H1 (cell line): ENCODE measurements at regions of chr20 and their contacts with region 1.

Region 1: GRCh38 chr20:52312132-52312729 is 120.7 kb upstream of the ZFP64 start:
- DNase-seq: no peak
- H3K4me3 ChIP-seq: no peak overlapping the region
- H3K27ac ChIP-seq: no peak overlapping the region
- H3K4me1 ChIP-seq: peaks cover 2 to 15% (median 6%) of the 10 kb centered on the region in 4 experiments; a peak in 6 of 7 replicates
- H3K27me3 ChIP-seq: peaks cover 0 to 2% (median 0%) of the 10 kb centered on the region in 4 experiments; a peak in 1 of 7 replicates
- CTCF ChIP-seq: peak in 2 of 3 experiments; percentile 61 to 71; a peak in 3 of 4 replicates
- EP300 ChIP-seq: no peak
- POLR2A ChIP-seq: no peak
- RAD21 ChIP-seq: peak; percentile 67 to 72

Region 2: DNA sequence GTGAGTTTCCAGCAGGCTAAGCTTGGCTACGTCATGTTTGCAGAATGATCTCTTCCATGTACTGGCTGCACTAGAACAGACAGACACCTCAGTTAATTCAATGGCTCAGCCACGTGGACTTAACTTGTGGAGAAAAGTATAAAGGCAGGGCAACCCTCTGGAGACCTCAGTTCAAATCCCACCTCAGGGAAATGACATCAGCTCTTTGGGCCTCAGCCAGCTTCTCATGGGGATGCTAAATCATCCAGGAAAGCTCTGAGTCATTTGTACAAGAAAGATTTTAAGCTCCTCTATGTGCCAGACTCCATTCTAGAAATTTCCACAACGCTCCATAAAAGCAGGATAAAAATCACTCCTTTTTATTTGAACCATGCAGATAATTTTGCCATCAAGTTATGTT is 381.5 kb before region 1 on chr20:
- CTCF ChIA-PET with region 1: no interaction called
- POLR2A ChIA-PET with region 1: no interaction called
- DNase-seq: no peak
- H3K4me3 ChIP-seq: no peak overlapping the region
- H3K27ac ChIP-seq: no peak overlapping the region
- H3K4me1 ChIP-seq: no peaks in the 10 kb centered on the region
- H3K27me3 ChIP-seq: no peaks in the 10 kb centered on the region
- CTCF ChIP-seq: no peak
- EP300 ChIP-seq: no peak
- POLR2A ChIP-seq: no peak
- RAD21 ChIP-seq: no peak

Region 3: DNA sequence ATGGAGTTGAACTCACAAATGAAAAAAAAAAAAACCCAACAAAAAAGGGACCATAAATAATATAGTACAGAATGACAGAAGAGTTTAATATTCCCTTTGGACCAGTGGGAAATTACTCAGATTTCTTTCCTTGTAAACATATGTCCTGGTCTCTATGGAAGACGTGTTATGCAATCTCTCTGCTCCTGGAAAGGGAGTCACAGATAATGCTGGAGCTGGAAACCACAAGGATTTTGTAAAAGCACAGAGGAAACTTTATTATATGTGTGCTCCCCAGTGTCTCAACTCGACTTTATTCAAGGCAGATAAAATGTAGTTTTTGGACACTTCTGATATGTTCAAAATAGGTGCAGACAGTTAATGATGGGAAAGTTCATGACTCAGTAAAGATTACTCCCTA is 32.5 kb before region 1 on chr20:
- CTCF ChIA-PET with region 1: interaction called, 12 read pairs
- POLR2A ChIA-PET with region 1: no interaction called
- DNase-seq: no peak
- H3K4me3 ChIP-seq: no peak overlapping the region
- H3K27ac ChIP-seq: no peak overlapping the region
- H3K4me1 ChIP-seq: no peaks in the 10 kb centered on the region
- H3K27me3 ChIP-seq: peaks cover 0 to 1% (median 0%) of the 10 kb centered on the region in 4 experiments; a peak in 1 of 7 replicates
- CTCF ChIP-seq: no peak
- EP300 ChIP-seq: no peak
- POLR2A ChIP-seq: no peak
- RAD21 ChIP-seq: no peak

Region 4: GRCh38 chr20:52295556-52295955 is 16.7 kb before region 1 on chr20:
- CTCF ChIA-PET with region 1: interaction called, 35 read pairs
- POLR2A ChIA-PET with region 1: no interaction called
- DNase-seq: no peak
- H3K4me3 ChIP-seq: no peak overlapping the region
- H3K27ac ChIP-seq: no peak overlapping the region
- H3K4me1 ChIP-seq: no peaks in the 10 kb centered on the region
- H3K27me3 ChIP-seq: no peaks in the 10 kb centered on the region
- CTCF ChIP-seq: no peak
- EP300 ChIP-seq: no peak
- POLR2A ChIP-seq: no peak
- RAD21 ChIP-seq: no peak

Region 5: GRCh38 chr20:52379723-52380336 is 67.6 kb after region 1 on chr20:
- CTCF ChIA-PET with region 1: interaction called, 12 read pairs
- POLR2A ChIA-PET with region 1: no interaction called
- DNase-seq: peak in 1 of 2 experiments; percentile 68
- H3K4me3 ChIP-seq: no peak overlapping the region
- H3K27ac ChIP-seq: no peak overlapping the region
- H3K4me1 ChIP-seq: no peaks in the 10 kb centered on the region
- H3K27me3 ChIP-seq: peaks cover 0 to 1% (median 0%) of the 10 kb centered on the region in 4 experiments; a peak in 1 of 7 replicates
- CTCF ChIP-seq: peak; percentile 71 to 87 (median 81)
- EP300 ChIP-seq: no peak
- POLR2A ChIP-seq: no peak
- RAD21 ChIP-seq: peak; percentile 69 to 76